H1 (cell line): ENCODE measurements at regions of chr3 and their contacts with region 1.

Region 1: DNA sequence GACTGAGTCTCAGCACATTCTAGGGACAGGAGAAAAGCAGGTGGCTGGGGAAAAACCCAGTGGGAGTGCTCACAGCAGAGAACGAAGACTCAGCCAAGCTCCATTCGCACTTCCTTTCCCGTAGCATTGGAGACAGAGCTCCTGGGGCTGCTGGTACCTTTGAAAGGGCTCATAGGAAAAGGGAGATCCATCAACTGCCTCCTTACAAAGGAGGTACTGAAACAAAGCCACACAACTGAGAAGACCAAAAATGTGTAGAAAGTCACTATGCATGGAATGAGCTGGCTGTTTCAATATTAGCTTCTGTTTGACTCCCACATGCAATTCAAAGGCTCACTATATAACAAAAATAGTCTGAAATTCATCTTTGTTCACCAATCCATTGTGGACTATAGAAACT is 16.9 kb downstream of the STIMATE start:
- DNase-seq: no peak
- H3K4me3 ChIP-seq: no peak overlapping the region
- H3K27ac ChIP-seq: no peak overlapping the region
- H3K4me1 ChIP-seq: peaks cover 0 to 5% (median 2%) of the 10 kb centered on the region in 4 experiments; a peak in 3 of 7 replicates
- H3K27me3 ChIP-seq: no peaks in the 10 kb centered on the region
- CTCF ChIP-seq: no peak
- EP300 ChIP-seq: no peak
- POLR2A ChIP-seq: no peak
- RAD21 ChIP-seq: no peak

Region 2: GRCh38 chr3:52406231-52406661 is 474.2 kb before region 1 on chr3:
- CTCF ChIA-PET with region 1: no interaction called
- POLR2A ChIA-PET with region 1: no interaction called
- DNase-seq: no peak
- H3K4me3 ChIP-seq: no peak overlapping the region
- H3K27ac ChIP-seq: no peak overlapping the region
- H3K4me1 ChIP-seq: peaks cover 0 to 10% (median 1%) of the 10 kb centered on the region in 4 experiments; a peak in 5 of 7 replicates
- H3K27me3 ChIP-seq: no peaks in the 10 kb centered on the region
- CTCF ChIP-seq: no peak
- EP300 ChIP-seq: no peak
- POLR2A ChIP-seq: no peak
- RAD21 ChIP-seq: no peak

Region 3: GRCh38 chr3:52609316-52609815 is 271.1 kb before region 1 on chr3:
- CTCF ChIA-PET with region 1: no interaction called
- POLR2A ChIA-PET with region 1: no interaction called
- DNase-seq: no peak
- H3K4me3 ChIP-seq: no peak overlapping the region
- H3K27ac ChIP-seq: no peak overlapping the region
- H3K4me1 ChIP-seq: no peaks in the 10 kb centered on the region
- H3K27me3 ChIP-seq: no peaks in the 10 kb centered on the region
- CTCF ChIP-seq: no peak
- EP300 ChIP-seq: no peak
- POLR2A ChIP-seq: no peak
- RAD21 ChIP-seq: no peak

Region 4: GRCh38 chr3:52890735-52891134 is 10.3 kb after region 1 on chr3:
- CTCF ChIA-PET with region 1: interaction called, 20 read pairs
- POLR2A ChIA-PET with region 1: no interaction called
- DNase-seq: no peak
- H3K4me3 ChIP-seq: no peak overlapping the region
- H3K27ac ChIP-seq: no peak overlapping the region
- H3K4me1 ChIP-seq: peaks cover 0 to 3% (median 0%) of the 10 kb centered on the region in 4 experiments; a peak in 1 of 7 replicates
- H3K27me3 ChIP-seq: no peaks in the 10 kb centered on the region
- CTCF ChIP-seq: no peak
- EP300 ChIP-seq: no peak
- POLR2A ChIP-seq: no peak
- RAD21 ChIP-seq: no peak

Region 5: GRCh38 chr3:52897130-52898122 is 17.0 kb after region 1 on chr3 and contains the start of gene STIMATE:
- CTCF ChIA-PET with region 1: interaction called, 11 read pairs
- POLR2A ChIA-PET with region 1: interaction called, 4 read pairs
- DNase-seq: peak; percentile 60 to 91
- H3K4me3 ChIP-seq: peak within 1 kb of the TSS; percentile 76 to 84 (median 80)
- H3K27ac ChIP-seq: no peak within 1 kb of the TSS
- H3K4me1 ChIP-seq: peaks cover 0 to 3% (median 1%) of the 10 kb centered on the region in 4 experiments; a peak in 2 of 7 replicates
- H3K27me3 ChIP-seq: no peaks in the 10 kb centered on the region
- CTCF ChIP-seq: no peak
- EP300 ChIP-seq: 0 out of 3 replicates have a peak, but pooled peaks of 1 of the 2 experiments have one; percentile 23
- POLR2A ChIP-seq: peak in 1 of 2 experiments; percentile 61; a peak in 2 of 3 replicates
- RAD21 ChIP-seq: no peak
- total RNA-seq, gene STIMATE: 22.1 and 23.0 TPM in 2 replicates